Ascending aorta (tissue), 2 donors: ENCODE measurements at regions of chr9 and their contacts with region 1.

Region 1: DNA sequence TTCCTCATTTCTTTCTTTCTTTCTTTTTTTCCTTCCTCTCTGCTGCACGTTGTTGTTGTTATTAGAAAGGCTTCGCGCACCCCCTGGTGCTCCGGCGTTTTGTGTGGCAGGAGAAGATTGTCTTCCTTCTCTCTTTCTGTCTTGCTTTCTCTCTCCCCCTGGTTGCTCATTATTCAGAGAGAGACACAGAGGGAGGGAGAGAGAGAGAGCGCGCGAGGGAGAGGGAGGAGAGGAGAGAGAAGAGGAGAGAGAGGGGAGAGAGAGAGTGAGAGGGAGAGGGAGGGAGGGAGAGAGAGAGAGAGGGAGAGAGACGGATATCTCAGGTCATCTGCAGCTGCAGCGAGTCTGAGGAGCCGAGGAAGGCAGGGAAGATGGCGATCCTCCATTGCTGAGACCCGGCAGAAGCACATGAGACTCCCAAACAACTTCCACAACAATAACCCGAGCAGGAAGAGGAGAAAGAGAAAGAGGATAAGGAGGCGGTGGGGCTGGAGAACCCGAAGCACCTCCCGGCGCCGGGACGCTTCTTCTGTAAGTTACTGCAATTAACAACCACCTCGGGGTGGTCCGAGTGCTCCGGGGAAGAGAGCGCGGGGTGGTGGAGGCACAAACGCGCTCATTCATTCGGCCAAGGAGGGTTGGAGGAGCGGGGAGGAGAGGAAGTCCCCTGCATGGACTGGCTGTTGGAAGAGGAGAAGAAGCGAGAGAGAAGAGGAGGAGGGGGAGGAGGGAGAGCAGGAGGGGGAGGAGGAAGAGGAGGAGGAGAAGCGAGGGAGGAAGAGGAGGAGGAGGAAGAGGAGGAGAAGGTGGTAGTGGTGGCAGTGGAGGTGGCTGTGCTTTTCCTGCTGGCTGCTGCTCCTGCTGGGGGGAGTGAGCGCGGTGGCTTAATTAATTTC is at the start of gene ZNF462:
- DNase-seq: peak in 1 of 2 donors; percentile 65
- H3K4me3 ChIP-seq: peak within 1 kb of the TSS; percentile 69 to 76
- H3K27ac ChIP-seq: peak within 1 kb of the TSS; percentile 77 to 83
- H3K4me1 ChIP-seq: peaks cover 0 to 6% of the 10 kb centered on the region in 2 donors
- H3K27me3 ChIP-seq: no peaks in the 10 kb centered on the region
- CTCF ChIP-seq: peak; percentile 11 to 87 (median 14)
- total RNA-seq, gene ZNF462: 8.8 TPM

Region 2: DNA sequence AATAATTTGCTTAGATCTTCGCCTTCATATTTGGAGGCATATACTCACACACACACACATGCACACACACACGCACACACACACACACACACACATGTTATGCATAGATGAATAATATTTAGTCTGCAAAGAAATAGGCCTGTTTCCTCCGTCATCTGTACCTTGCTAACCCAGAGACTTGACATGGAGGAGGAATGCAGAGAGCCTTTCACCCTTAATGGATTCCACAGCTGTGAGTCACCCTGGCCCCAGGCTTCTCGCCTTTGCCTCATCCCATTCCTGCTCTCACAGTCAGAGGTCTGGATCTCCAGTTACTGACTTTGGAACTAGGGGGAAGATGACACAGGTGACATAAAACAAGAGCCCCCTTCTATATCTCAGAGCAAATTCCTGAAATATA is 29.6 kb after region 1 on chr9:
- intact Hi-C with region 1: loop called (anchors 2 kb)
- DNase-seq: peak in 1 of 2 donors; percentile 70
- H3K4me3 ChIP-seq: no peak overlapping the region
- H3K27ac ChIP-seq: no peak overlapping the region
- H3K4me1 ChIP-seq: no peaks in the 10 kb centered on the region
- H3K27me3 ChIP-seq: no peaks in the 10 kb centered on the region
- CTCF ChIP-seq: no peak

Region 3: DNA sequence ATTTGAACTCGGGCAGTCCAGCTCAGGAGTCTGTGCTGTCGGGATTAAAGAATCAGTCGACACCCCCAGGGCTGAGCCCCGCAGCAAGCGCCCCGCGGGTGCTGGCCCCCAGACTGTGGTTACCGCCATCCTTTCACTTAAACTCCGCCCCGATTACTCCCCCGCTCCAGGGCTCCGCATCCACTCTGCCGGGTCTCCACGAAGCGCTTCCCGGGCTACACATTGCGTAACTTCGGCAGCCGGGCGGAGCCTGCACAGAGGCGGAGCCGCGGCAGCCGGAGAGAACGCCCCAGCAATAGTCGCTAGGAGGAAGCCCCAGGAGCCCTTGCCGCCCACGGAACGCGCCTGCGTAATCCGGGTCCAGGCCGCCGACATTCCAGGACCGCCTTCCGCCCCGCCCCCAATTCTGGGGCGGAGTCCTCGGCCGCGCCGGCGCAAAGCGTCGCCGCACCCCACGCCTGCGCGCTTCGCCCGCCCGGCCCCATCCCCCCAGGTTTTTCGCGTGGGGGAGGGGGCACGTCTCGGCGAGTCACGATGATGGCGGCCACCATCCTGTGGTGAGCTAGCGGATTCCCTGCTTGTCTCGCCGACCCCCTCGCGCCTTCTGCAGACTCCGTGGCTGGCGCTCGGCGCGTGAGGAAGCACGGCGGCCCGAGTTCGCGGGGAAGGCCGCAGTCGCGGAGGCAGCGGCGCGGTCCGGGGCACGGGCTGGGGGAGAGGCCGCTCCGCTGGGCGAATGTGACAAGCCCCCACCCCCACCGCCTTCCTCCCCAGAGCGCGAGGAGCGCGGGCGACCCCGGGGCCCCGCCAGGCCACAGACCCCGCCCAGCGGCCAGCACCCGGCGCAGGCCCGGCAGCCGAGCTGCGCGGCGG is 419.9 kb after region 1 on chr9 and contains the start of gene RAD23B:
- intact Hi-C with region 1: loop called (anchors 5 kb)
- DNase-seq: peak; percentile 93 to 99
- H3K4me3 ChIP-seq: peak within 1 kb of the TSS; percentile 82 to 95
- H3K27ac ChIP-seq: peak within 1 kb of the TSS; percentile 98 to 99
- H3K4me1 ChIP-seq: peaks cover 0 to 8% of the 10 kb centered on the region in 2 donors
- H3K27me3 ChIP-seq: no peaks in the 10 kb centered on the region
- CTCF ChIP-seq: no peak
- total RNA-seq, gene RAD23B: 57.7 TPM